ENCODE measurements at regions of chr16 and their contacts with region 1.

Region 1: DNA sequence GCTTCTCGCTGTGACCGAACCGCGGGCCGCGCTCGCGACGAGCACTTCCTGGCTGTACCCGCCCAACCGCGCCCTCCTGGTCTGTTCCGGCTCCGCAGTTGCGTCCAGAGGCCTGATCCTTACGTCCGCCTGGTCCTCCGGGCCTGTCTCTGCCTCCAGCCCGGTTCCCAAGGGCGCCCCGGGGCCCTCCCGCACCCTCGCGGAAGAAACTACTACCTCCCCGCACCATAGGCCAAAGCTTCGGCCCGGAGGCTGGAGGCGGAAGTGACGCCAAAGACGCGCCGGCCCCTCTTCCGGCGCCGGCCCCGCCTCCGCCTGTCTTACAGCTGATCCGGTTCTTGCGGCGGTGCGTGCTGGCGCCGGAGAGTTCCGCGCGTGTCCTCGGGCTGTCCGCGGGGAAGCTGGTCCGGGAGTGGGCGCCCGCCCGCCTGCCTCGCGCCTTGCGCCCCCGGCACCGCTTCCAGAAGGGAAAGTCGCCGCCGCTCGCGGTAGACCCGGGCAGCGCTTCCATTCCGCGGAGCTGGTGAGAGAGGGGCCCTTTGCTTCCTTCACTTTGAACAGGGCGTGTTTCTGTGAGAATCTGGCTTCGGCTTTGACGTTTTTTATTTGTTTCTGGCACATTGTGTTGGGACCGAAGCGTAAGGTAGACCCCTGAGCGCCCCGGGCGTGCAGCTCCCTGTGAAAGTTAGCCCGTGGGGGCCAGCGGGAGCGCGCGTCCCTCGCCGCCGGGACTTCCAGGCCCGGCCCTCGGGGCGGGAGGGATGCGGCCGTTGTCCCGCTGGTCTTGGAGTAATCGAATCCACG is at the start of gene ZNF778:
- DNase-seq: peak; percentile 56 to 92 (median 80)
- ATAC-seq: peak; percentile 69
- H3K4me3 ChIP-seq: peak within 1 kb of the TSS; percentile 87 to 90
- H3K4me3 Mint-ChIP-seq: peak within 1 kb of the TSS; percentile 93
- H3K27ac ChIP-seq: peak within 1 kb of the TSS; percentile 95 to 98
- H3K27ac Mint-ChIP-seq: peak within 1 kb of the TSS; percentile 83
- H3K4me1 ChIP-seq: peaks cover 16% of the 10 kb centered on the region
- H3K4me1 Mint-ChIP-seq: peaks cover 35% of the 10 kb centered on the region
- H3K27me3 ChIP-seq: no peaks in the 10 kb centered on the region
- H3K27me3 Mint-ChIP-seq: no peaks in the 10 kb centered on the region
- CTCF ChIP-seq: no peak
- total RNA-seq, gene ZNF778: 8.4 to 8.9 TPM

Region 2: DNA sequence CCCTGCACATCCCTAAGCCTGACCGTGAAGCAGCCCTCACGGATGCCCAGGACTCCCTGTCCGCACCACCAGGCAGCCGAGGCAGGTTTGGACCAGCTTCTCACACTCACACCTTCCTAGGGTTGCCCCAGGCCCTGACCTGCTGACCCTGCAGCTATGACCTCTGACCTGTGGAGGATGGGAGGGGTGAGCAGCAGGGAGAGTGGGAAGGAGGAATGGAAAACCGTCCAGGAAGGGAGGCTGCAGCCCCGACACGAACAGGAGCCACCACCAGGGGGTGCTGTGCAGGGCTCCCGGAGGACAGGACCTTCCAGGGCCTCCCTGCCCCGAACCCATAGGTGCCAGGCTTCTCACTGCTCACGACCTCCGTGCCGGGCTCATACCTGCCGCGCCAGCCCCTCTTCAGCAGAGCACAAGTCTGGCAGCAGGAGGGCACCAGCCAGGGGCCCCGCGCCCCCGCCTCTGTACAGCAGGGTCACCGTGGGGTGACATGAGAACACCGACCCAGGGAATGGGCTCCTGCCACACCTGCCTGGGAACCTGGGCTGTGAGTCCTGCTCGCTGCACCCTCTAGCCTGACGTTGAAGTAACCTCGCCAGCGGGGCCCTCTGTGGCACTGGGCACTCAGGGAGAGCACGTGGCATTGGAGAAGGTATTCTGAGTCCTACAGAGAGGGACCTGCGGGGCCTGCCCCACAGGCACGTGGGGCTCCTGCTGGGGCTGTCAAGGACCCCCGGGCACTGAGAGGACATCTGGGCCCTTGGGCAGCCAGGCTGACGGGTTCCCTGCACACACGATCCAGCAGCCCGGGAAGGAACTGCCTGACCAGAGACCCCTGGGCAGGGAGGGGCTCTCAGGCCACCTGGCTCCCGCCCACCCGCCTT is 473.7 kb before region 1 on chr16:
- CTCF ChIA-PET with region 1: interaction called, 11 read pairs
- POLR2A ChIA-PET with region 1: no interaction called
- intact Hi-C with region 1: loop called in 1 of 2 experiments (anchors 1 kb)
- DNase-seq: peak; percentile 43 to 88 (median 77)
- ATAC-seq: peak; percentile 64
- H3K4me3 ChIP-seq: no peak overlapping the region
- H3K4me3 Mint-ChIP-seq: no peak overlapping the region
- H3K27ac ChIP-seq: no peak overlapping the region
- H3K27ac Mint-ChIP-seq: no peak overlapping the region
- H3K4me1 ChIP-seq: peaks cover 33% of the 10 kb centered on the region
- H3K4me1 Mint-ChIP-seq: peaks cover 25% of the 10 kb centered on the region
- H3K27me3 ChIP-seq: no peaks in the 10 kb centered on the region
- H3K27me3 Mint-ChIP-seq: no peaks in the 10 kb centered on the region
- CTCF ChIP-seq: peak; percentile 89

Region 3: GRCh38 chr16:88941913-88942909 is 275.4 kb before region 1 on chr16:
- CTCF ChIA-PET with region 1: interaction called, 7 read pairs
- POLR2A ChIA-PET with region 1: interaction called, 3 read pairs
- intact Hi-C with region 1: loop called (anchors 1 kb)
- DNase-seq: peak; percentile 26 to 77 (median 59)
- ATAC-seq: peak; percentile 76
- H3K4me3 ChIP-seq: no peak overlapping the region
- H3K4me3 Mint-ChIP-seq: peak overlapping the region; percentile 54
- H3K27ac ChIP-seq: no peak overlapping the region
- H3K27ac Mint-ChIP-seq: no peak overlapping the region
- H3K4me1 ChIP-seq: peaks cover 21% of the 10 kb centered on the region
- H3K4me1 Mint-ChIP-seq: peaks cover 11% of the 10 kb centered on the region
- H3K27me3 ChIP-seq: peaks cover 18 to 28% of the 10 kb centered on the region in 2 experiments
- H3K27me3 Mint-ChIP-seq: peaks cover 34% of the 10 kb centered on the region
- CTCF ChIP-seq: peak; percentile 78

Region 4: DNA sequence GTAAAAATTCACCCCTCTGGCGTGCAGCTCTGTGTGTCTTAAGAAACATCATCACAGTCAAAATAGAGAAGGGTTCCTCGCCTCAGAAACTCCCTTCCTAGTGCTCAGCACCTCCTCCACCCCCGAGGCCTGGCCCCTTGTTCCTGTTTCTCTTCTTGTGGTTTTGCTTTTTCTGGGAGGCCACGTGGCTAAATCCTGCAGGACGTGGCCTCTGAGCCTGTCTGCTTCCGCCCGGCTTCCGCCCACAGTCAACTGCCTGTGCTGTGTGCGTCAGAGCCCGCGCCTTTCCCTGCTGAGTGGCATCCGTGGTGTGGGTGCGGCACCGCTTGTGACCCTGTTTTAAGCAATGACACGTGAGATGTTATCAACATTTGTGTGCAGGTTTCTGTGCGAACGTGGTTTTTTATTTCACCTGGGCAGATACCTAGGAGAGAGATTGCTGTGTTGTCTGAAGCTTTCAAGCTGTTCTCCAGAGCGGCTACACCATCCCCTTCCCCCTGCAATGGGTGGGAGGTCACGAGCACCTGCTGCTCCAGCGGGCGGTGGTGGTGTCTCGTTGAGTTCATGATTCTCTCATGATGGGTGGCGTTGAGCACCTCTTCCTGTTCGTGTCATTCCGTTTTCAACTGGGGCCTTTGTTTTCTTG is 102.3 kb before region 1 on chr16:
- CTCF ChIA-PET with region 1: interaction called, 3 read pairs
- POLR2A ChIA-PET with region 1: interaction called, 3 read pairs
- intact Hi-C with region 1: loop called (anchors 1 to 2 kb)
- DNase-seq: peak; percentile 80 to 99 (median 91)
- ATAC-seq: peak; percentile 82
- H3K4me3 ChIP-seq: peak overlapping the region; percentile 37 to 40
- H3K4me3 Mint-ChIP-seq: peak overlapping the region; percentile 81
- H3K27ac ChIP-seq: peak overlapping the region; percentile 69 to 84
- H3K27ac Mint-ChIP-seq: peak overlapping the region; percentile 99
- H3K4me1 ChIP-seq: peaks cover 49% of the 10 kb centered on the region
- H3K4me1 Mint-ChIP-seq: peaks cover 38% of the 10 kb centered on the region
- H3K27me3 ChIP-seq: no peaks in the 10 kb centered on the region
- H3K27me3 Mint-ChIP-seq: no peaks in the 10 kb centered on the region
- CTCF ChIP-seq: no peak

Region 5: GRCh38 chr16:89155184-89155679 is 62.4 kb before region 1 on chr16:
- CTCF ChIA-PET with region 1: no interaction called
- POLR2A ChIA-PET with region 1: no interaction called
- intact Hi-C with region 1: no loop called
- DNase-seq: no peak
- ATAC-seq: no peak
- H3K4me3 ChIP-seq: no peak overlapping the region
- H3K4me3 Mint-ChIP-seq: no peak overlapping the region
- H3K27ac ChIP-seq: no peak overlapping the region
- H3K27ac Mint-ChIP-seq: no peak overlapping the region
- H3K4me1 ChIP-seq: no peaks in the 10 kb centered on the region
- H3K4me1 Mint-ChIP-seq: no peaks in the 10 kb centered on the region
- H3K27me3 ChIP-seq: no peaks in the 10 kb centered on the region
- H3K27me3 Mint-ChIP-seq: no peaks in the 10 kb centered on the region
- CTCF ChIP-seq: no peak

Region 6: DNA sequence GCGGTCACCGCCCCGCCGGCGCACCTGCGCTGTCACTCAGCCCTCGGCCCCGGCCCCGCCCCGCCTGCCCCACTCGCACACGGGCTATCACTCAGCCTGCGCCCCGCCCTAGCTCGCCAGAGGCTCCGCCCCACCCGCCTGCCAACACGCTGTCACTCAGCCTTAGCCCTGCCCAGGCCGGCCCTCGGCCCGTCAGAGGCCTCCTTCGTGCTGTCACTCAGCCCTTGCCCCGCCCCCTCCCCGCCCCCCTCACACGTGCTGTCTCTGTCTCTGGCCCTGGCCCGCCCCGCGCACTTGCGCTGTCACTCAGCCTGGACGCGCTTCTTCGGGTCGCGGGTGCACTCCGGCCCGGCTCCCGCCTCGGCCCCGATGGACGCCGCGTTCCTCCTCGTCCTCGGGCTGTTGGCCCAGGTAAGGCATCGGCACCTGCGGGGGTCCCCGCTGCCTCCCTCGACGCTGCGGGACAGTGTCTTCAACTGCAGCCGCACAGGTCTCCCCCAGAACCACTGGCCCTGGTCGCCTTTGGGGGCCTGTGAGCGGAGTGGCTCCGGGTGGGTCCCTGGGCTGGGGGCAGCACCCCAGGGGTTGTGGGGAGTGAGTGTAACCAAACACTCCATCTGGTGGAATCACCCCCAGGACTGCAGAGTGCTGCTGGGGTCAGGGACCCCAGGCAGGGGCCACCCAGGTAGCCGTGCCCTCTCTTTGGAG is 46.0 kb before region 1 on chr16 and contains the start of gene CDH15:
- CTCF ChIA-PET with region 1: no interaction called
- POLR2A ChIA-PET with region 1: no interaction called
- intact Hi-C with region 1: loop called (anchors 1 kb)
- DNase-seq: peak; percentile 83 to 98 (median 91)
- ATAC-seq: peak; percentile 96
- H3K4me3 ChIP-seq: peak within 1 kb of the TSS; percentile 35 to 50
- H3K4me3 Mint-ChIP-seq: peak within 1 kb of the TSS; percentile 69
- H3K27ac ChIP-seq: no peak within 1 kb of the TSS
- H3K27ac Mint-ChIP-seq: no peak within 1 kb of the TSS
- H3K4me1 ChIP-seq: peaks cover 29% of the 10 kb centered on the region
- H3K4me1 Mint-ChIP-seq: peaks cover 6% of the 10 kb centered on the region
- H3K27me3 ChIP-seq: peaks cover 0 to 2% of the 10 kb centered on the region in 2 experiments
- H3K27me3 Mint-ChIP-seq: no peaks in the 10 kb centered on the region
- CTCF ChIP-seq: no peak
- total RNA-seq, gene CDH15: 0.24 TPM in 1 of 2 experiments, not detected in the other

Region 7: GRCh38 chr16:89241187-89242007 is 23.8 kb after region 1 on chr16:
- CTCF ChIA-PET with region 1: interaction called, 3 read pairs
- POLR2A ChIA-PET with region 1: interaction called, 7 read pairs
- intact Hi-C with region 1: loop called (anchors 1 kb)
- DNase-seq: peak; percentile 62 to 97 (median 87)
- ATAC-seq: peak; percentile 88
- H3K4me3 ChIP-seq: peak overlapping the region; percentile 76 to 85
- H3K4me3 Mint-ChIP-seq: peak overlapping the region; percentile 92
- H3K27ac ChIP-seq: peak overlapping the region; percentile 89 to 100
- H3K27ac Mint-ChIP-seq: peak overlapping the region; percentile 99
- H3K4me1 ChIP-seq: peaks cover 8% of the 10 kb centered on the region
- H3K4me1 Mint-ChIP-seq: peaks cover 25% of the 10 kb centered on the region
- H3K27me3 ChIP-seq: no peaks in the 10 kb centered on the region
- H3K27me3 Mint-ChIP-seq: no peaks in the 10 kb centered on the region
- CTCF ChIP-seq: no peak

Measured in CD8-positive, alpha-beta T cell (primary cell).